Transverse colon (tissue), 4 donors: ENCODE measurements at regions of chr4 and their contacts with region 1.

Region 1: GRCh38 chr4:53015681-53016080 is 153.6 kb downstream of the RASL11B start:
- DNase-seq: peak; percentile 24
- H3K4me3 ChIP-seq: no peak overlapping the region
- H3K27ac ChIP-seq: no peak overlapping the region
- H3K4me1 ChIP-seq: peaks cover 3 to 31% (median 13%) of the 10 kb centered on the region in 4 donors
- H3K27me3 ChIP-seq: no peaks in the 10 kb centered on the region
- CTCF ChIP-seq: peak; percentile 59 to 65 (median 62)
- EP300 ChIP-seq: no peak
- POLR2A ChIP-seq: no peak

Region 2: DNA sequence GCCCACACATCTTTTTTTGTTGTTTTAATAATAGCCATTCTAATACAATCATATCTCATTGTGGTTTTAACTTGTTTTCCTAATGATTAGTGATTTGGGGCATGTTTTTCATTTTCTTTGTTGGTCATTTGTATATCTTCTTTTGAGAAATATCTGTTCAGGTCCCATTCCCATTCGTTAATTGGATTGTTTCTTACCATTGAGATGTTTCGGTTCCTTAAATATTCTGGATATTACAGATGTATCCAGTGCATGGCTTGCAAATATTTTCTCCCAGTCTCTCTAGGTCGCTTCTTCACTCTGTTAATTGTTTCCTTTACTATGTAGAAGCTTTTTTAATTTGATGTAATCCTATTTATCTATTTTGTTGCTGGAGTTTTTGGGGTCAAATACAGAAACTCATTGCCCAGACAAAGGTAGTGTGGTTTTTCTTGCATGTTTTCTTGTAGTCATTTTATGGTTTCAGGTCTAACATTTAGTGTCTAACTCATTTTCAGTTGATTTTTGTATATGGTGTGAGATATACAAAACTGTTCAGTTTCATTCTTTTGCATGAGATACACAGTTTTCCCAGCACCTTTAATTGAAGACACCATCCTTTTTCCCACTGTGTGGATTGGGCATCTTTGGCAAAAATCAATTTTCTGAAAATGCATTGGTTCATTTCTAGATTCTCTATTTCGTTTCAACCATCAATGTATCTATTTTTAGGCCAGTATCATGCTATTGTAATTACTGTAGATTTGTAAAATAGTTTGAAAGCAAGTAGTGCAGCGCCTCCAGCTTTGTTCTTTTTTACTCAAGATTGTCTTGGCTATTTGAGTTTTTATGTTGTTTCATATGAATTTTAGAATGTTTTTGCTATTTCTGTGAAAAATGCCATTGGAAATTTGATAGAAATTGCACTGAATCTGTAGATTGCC is 154.3 kb after region 1 on chr4:
- in situ Hi-C with region 1: no loop called
- intact Hi-C with region 1: no loop called
- DNase-seq: no peak
- H3K4me3 ChIP-seq: no peak overlapping the region
- H3K27ac ChIP-seq: no peak overlapping the region
- H3K4me1 ChIP-seq: no peaks in the 10 kb centered on the region
- H3K27me3 ChIP-seq: no peaks in the 10 kb centered on the region
- CTCF ChIP-seq: no peak
- EP300 ChIP-seq: no peak
- POLR2A ChIP-seq: no peak

Region 3: GRCh38 chr4:53365486-53366300 is 350.0 kb after region 1 on chr4 and contains the start of gene SCFD2:
- in situ Hi-C with region 1: loop called in 1 of 4 experiments (anchors 25 kb)
- intact Hi-C with region 1: no loop called
- DNase-seq: peak; percentile 99
- H3K4me3 ChIP-seq: peak within 1 kb of the TSS; percentile 62 to 95 (median 69)
- H3K27ac ChIP-seq: peak within 1 kb of the TSS; percentile 53 to 83 (median 68)
- H3K4me1 ChIP-seq: peaks cover 3 to 38% (median 16%) of the 10 kb centered on the region in 4 donors
- H3K27me3 ChIP-seq: no peaks in the 10 kb centered on the region
- CTCF ChIP-seq: no peak
- EP300 ChIP-seq: no peak
- POLR2A ChIP-seq: no peak
- total RNA-seq, gene SCFD2: 12.7 to 23.7 (median 18.3) TPM

Region 4: GRCh38 chr4:53490965-53491622 is 475.4 kb after region 1 on chr4:
- in situ Hi-C with region 1: loop called in 1 of 4 experiments (anchors 25 kb)
- intact Hi-C with region 1: no loop called
- DNase-seq: peak; percentile 30
- H3K4me3 ChIP-seq: no peak overlapping the region
- H3K27ac ChIP-seq: peak overlapping the region; percentile 28 to 46 (median 38)
- H3K4me1 ChIP-seq: no peaks in the 10 kb centered on the region
- H3K27me3 ChIP-seq: no peaks in the 10 kb centered on the region
- CTCF ChIP-seq: peak; percentile 51 to 72 (median 60)
- EP300 ChIP-seq: no peak
- POLR2A ChIP-seq: no peak

Region 5: GRCh38 chr4:53908661-53909078 is 893.0 kb after region 1 on chr4:
- in situ Hi-C with region 1: loop called in 1 of 4 experiments (anchors 25 kb)
- intact Hi-C with region 1: no loop called
- DNase-seq: peak; percentile 15
- H3K4me3 ChIP-seq: peak overlapping the region in 1 of 4 donors; percentile 5
- H3K27ac ChIP-seq: peak overlapping the region; percentile 19 to 62 (median 41)
- H3K4me1 ChIP-seq: peaks cover 0 to 27% (median 15%) of the 10 kb centered on the region in 4 donors
- H3K27me3 ChIP-seq: peaks cover 41% of the 10 kb centered on the region
- CTCF ChIP-seq: peak; percentile 44 to 74 (median 58)
- EP300 ChIP-seq: no peak
- POLR2A ChIP-seq: no peak

Region 6: GRCh38 chr4:54217642-54218495 is 1202.2 kb after region 1 on chr4:
- in situ Hi-C with region 1: loop called in 1 of 4 experiments (anchors 25 kb)
- intact Hi-C with region 1: no loop called
- DNase-seq: peak; percentile 69
- H3K4me3 ChIP-seq: peak overlapping the region in 2 of 4 donors; percentile 4 to 40
- H3K27ac ChIP-seq: peak overlapping the region in 1 of 4 donors; percentile 34
- H3K4me1 ChIP-seq: peaks cover 0 to 10% (median 1%) of the 10 kb centered on the region in 4 donors
- H3K27me3 ChIP-seq: peaks cover 34% of the 10 kb centered on the region
- CTCF ChIP-seq: peak; percentile 90 to 94 (median 91)
- EP300 ChIP-seq: no peak
- POLR2A ChIP-seq: no peak

Region 7: GRCh38 chr4:54233277-54233696 is 1217.6 kb after region 1 on chr4:
- in situ Hi-C with region 1: loop called in 2 of 4 experiments (anchors 10 to 25 kb)
- intact Hi-C with region 1: no loop called
- DNase-seq: peak; percentile 81
- H3K4me3 ChIP-seq: peak overlapping the region; percentile 19 to 56 (median 37)
- H3K27ac ChIP-seq: peak overlapping the region; percentile 55 to 79 (median 69)
- H3K4me1 ChIP-seq: peaks cover 4 to 48% (median 29%) of the 10 kb centered on the region in 4 donors
- H3K27me3 ChIP-seq: peaks cover 76% of the 10 kb centered on the region
- CTCF ChIP-seq: peak; percentile 63 to 84 (median 72)
- EP300 ChIP-seq: no peak
- POLR2A ChIP-seq: no peak

Region 8: DNA sequence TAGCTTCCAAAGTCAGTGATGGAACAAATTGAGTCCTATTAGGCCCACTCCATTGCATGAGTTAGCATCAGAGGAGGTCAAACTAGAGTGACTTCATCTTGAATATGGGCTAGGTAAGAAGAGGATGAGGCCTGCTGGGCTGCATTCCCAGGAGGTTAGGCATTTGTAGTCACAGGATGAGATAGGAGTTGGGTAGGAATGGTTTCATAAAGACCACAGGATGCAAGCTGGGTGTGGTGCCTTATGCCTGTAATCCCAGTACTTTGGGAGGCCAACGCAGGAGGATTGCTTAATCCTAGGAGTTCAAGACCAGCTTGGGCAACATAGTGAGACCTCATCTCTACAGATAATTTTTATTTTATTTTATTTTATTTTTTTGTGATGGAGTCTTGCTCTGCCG is 1240.2 kb after region 1 on chr4:
- in situ Hi-C with region 1: loop called in 1 of 4 experiments (anchors 25 kb)
- intact Hi-C with region 1: no loop called
- DNase-seq: no peak
- H3K4me3 ChIP-seq: no peak overlapping the region
- H3K27ac ChIP-seq: peak overlapping the region in 1 of 4 donors; percentile 17
- H3K4me1 ChIP-seq: no peaks in the 10 kb centered on the region
- H3K27me3 ChIP-seq: no peaks in the 10 kb centered on the region
- CTCF ChIP-seq: no peak
- EP300 ChIP-seq: no peak
- POLR2A ChIP-seq: no peak